Common myeloid progenitor, CD34-positive (primary cell): ENCODE measurements at regions of chr11 and their contacts with region 1.

Region 1: GRCh38 chr11:126419801-126420697 is 64.6 kb downstream of the ST3GAL4 start:
- DNase-seq: peak; percentile 90 to 97 (median 92)
- H3K4me3 ChIP-seq: peak overlapping the region in 4 of 7 experiments; percentile 13 to 44 (median 20)
- H3K27ac ChIP-seq: no peak overlapping the region
- H3K4me1 ChIP-seq: peaks cover 10 to 66% (median 53%) of the 10 kb centered on the region in 4 experiments
- H3K27me3 ChIP-seq: no peaks in the 10 kb centered on the region

Region 2: GRCh38 chr11:126391970-126392639 is 27.9 kb before region 1 on chr11:
- CTCF ChIA-PET with region 1: interaction called, 12 read pairs
- POLR2A ChIA-PET with region 1: interaction called, 3 read pairs
- DNase-seq: peak; percentile 66 to 79 (median 70)
- H3K4me3 ChIP-seq: peak overlapping the region in 4 of 7 experiments; percentile 26 to 54 (median 38)
- H3K27ac ChIP-seq: peak overlapping the region; percentile 58 to 77
- H3K4me1 ChIP-seq: peaks cover 26 to 83% (median 75%) of the 10 kb centered on the region in 4 experiments
- H3K27me3 ChIP-seq: no peaks in the 10 kb centered on the region

Region 3: GRCh38 chr11:126431401-126432064 is 11.5 kb after region 1 on chr11:
- CTCF ChIA-PET with region 1: interaction called, 44 read pairs
- POLR2A ChIA-PET with region 1: no interaction called
- DNase-seq: no peak
- H3K4me3 ChIP-seq: no peak overlapping the region
- H3K27ac ChIP-seq: no peak overlapping the region
- H3K4me1 ChIP-seq: peaks cover 0 to 43% (median 17%) of the 10 kb centered on the region in 4 experiments
- H3K27me3 ChIP-seq: no peaks in the 10 kb centered on the region

Region 4: GRCh38 chr11:126561327-126561893 is 141.4 kb after region 1 on chr11:
- CTCF ChIA-PET with region 1: no interaction called
- POLR2A ChIA-PET with region 1: no interaction called
- DNase-seq: peak; percentile 55 to 81 (median 74)
- H3K4me3 ChIP-seq: no peak overlapping the region
- H3K27ac ChIP-seq: no peak overlapping the region
- H3K4me1 ChIP-seq: no peaks in the 10 kb centered on the region
- H3K27me3 ChIP-seq: peaks cover 0 to 20% (median 3%) of the 10 kb centered on the region in 5 experiments